Activated CD4-positive, alpha-beta T cell treated with anti-CD3 and anti-CD28 coated beads, Interleukin-2, amount 10 ng/mL, durations not matched to agents 7 days and 5 days (primary cell): ENCODE measurements at regions of chr5 and their contacts with region 1.

Region 1: GRCh38 chr5:157204765-157205164 is 24.1 kb downstream of the ITK start:
- DNase-seq: no peak
- H3K4me3 Mint-ChIP-seq: peak overlapping the region; percentile 3
- H3K27ac Mint-ChIP-seq: peak overlapping the region; percentile 75
- H3K4me1 Mint-ChIP-seq: peaks cover 85% of the 10 kb centered on the region
- H3K27me3 Mint-ChIP-seq: no peaks in the 10 kb centered on the region

Region 2: GRCh38 chr5:157189223-157189622 is 15.5 kb before region 1 on chr5:
- CTCF ChIA-PET with region 1: interaction called, 16 read pairs
- POLR2A ChIA-PET with region 1: interaction called, 3 read pairs
- DNase-seq: no peak
- H3K4me3 Mint-ChIP-seq: peak overlapping the region; percentile 97
- H3K27ac Mint-ChIP-seq: peak overlapping the region; percentile 74
- H3K4me1 Mint-ChIP-seq: peaks cover 85% of the 10 kb centered on the region
- H3K27me3 Mint-ChIP-seq: no peaks in the 10 kb centered on the region

Region 3: DNA sequence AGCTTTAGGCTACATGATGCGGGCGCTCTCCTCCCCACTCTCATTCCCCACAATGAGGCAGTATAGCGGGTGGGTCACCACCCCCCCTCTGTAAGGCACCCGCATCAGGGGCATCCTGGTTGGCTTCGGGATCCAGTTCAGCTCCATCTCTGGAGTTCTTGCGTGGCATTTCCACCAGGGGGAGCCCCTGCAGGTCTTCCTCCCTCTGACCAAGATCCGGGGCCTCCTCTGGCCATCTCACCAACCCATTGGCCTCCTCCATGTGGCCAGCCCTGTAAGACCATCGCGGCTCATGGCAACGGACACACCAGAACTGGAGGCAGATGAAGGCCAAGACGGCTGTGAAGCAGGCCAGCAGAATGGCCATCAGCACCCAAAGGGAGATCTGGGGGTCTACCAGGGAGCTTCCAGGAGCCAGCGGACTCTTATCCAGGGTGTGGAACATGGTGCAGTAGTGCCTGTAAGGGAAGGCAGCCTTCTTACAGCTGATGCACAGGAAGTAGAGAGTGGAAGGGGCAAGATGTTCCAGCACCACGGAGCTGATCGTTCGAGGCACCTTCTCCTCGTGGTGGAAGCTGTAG is 138.1 kb after region 1 on chr5:
- CTCF ChIA-PET with region 1: no interaction called
- POLR2A ChIA-PET with region 1: no interaction called
- DNase-seq: peak; percentile 35
- H3K4me3 Mint-ChIP-seq: no peak overlapping the region
- H3K27ac Mint-ChIP-seq: no peak overlapping the region
- H3K4me1 Mint-ChIP-seq: peaks cover 17% of the 10 kb centered on the region
- H3K27me3 Mint-ChIP-seq: no peaks in the 10 kb centered on the region